ENCODE measurements at regions of chr17 and their contacts with region 1.

Region 1: GRCh38 chr17:76681222-76682137 is 29.3 kb downstream of the MXRA7 start:
- DNase-seq: peak; percentile 83
- H3K4me3 Mint-ChIP-seq: no peak overlapping the region
- H3K27ac Mint-ChIP-seq: no peak overlapping the region
- H3K4me1 Mint-ChIP-seq: no peaks in the 10 kb centered on the region
- H3K27me3 Mint-ChIP-seq: no peaks in the 10 kb centered on the region

Region 2: DNA sequence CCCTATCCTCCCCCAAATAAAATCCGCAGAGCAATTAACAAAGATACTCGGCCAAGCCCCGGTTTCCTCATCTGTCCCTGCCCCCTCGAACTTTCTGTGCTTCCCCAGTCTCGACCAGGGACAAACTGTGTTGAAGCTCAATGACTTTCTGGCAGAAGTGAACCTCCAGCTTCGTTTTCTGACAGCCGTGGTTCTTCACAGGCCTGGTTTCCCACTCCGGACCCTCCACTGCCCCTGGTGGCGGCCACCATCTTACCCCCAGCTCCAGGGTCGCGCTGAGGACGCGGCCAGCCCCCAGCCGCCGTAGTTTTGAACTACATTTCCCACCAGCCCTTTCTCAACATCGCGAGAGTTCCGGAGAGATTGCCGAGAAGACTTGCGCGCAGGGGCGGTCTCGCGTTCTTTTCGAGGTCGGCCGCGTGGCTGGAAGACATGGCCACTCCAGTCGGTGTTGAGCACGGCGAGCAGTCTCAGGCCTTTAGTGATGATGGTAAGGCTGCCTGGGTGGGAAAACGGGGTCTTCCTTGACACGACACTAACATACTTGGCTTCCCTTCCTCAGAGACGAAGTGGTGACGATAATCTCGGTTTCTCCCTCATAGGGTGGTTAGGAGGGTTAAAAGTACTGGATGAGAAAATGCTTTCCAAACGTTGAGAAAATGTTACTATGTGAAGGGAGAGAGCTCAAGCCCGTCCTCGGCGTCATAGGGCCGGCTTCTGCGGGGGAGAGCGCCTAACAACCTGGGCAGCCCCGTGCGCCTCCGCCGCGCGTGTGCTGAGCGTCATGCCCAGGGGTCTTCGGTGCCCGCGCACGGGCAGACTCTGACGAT is 123.9 kb before region 1 on chr17:
- CTCF ChIA-PET with region 1: interaction called, 9 read pairs
- intact Hi-C with region 1: loop called (anchors 1 kb)
- DNase-seq: peak; percentile 97
- H3K4me3 Mint-ChIP-seq: peak overlapping the region; percentile 96
- H3K27ac Mint-ChIP-seq: peak overlapping the region; percentile 96
- H3K4me1 Mint-ChIP-seq: peaks cover 54% of the 10 kb centered on the region
- H3K27me3 Mint-ChIP-seq: no peaks in the 10 kb centered on the region

Region 3: DNA sequence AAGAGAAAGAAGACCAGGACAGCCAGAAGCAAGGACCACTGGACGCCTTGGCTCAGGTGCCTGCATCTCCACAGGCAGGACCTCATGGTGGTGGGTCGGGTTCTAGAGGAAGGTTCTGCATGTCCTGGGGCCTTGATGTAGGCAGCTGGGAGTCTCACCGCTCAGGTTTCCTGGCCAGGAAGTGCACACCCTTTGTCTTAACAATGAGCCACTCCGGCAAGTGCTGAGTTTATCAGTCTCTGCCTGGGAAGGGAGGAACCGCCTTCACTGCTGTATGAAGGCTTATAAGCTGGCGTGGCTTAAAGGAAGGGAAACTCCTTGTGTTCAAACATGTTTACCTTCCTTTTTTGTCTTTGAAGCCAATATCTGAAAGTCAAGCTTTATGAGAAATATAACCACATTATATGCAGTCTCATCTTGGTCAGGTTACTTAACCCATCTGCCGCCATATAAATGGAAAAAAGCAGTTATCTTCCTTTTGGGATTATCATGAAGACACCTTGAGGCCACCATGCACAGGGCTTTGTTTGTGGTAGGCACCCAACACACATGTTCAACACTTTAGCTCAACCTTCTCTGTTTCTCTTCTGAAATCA is 37.8 kb before region 1 on chr17 and contains the start of gene ST6GALNAC1:
- CTCF ChIA-PET with region 1: interaction called, 4 read pairs
- intact Hi-C with region 1: loop called (anchors 5 kb)
- DNase-seq: peak; percentile 58
- H3K4me3 Mint-ChIP-seq: peak within 1 kb of the TSS; percentile 57
- H3K27ac Mint-ChIP-seq: peak within 1 kb of the TSS; percentile 62
- H3K4me1 Mint-ChIP-seq: peaks cover 28% of the 10 kb centered on the region
- H3K27me3 Mint-ChIP-seq: no peaks in the 10 kb centered on the region
- total RNA-seq, gene ST6GALNAC1: 1.1 to 1.3 TPM

Region 4: DNA sequence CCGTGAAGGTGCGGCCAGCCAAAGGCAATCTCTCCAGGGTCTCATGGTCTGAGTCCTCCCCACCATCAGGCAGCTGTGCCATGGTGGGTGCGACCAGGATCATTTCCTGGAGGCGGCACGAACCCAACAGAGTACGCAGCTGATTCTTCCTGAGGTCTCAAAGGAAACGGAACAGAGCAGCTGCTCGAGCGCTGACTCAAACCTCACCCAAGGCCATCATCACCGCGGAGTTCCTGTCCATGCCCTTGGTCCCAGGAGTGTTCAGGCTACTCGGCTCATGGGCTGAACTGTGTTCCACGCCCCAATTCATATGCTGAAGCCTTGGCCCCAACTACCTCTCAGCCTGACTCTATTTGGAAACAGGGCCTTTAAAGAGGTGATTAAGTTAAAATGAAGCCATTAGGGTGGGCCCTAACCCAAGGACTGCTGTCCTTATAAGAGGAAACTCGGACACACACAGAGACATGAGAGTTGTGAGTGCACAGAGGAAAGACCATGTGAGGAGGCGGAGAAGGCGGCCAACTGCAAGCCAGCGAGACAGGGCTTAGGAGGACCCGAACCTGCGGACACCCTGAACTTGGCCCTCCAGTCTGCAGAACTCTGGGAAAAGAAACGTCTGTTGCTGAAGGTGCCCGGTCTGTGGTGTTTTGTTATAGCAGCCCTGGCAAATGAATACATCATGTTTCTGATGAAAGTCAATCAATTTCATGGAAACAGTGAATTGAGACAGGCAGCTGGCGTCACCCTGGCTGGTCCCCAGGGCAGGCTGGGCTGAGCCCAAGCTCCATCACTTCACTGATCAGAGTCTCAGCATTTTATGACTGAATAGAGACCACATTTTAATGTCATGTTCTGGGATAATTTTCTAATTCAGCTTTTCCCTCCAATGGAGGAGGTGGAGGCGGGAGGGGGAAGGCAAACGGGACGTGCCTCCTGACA is 15.6 kb after region 1 on chr17:
- CTCF ChIA-PET with region 1: interaction called, 11 read pairs
- intact Hi-C with region 1: no loop called
- DNase-seq: no peak
- H3K4me3 Mint-ChIP-seq: no peak overlapping the region
- H3K27ac Mint-ChIP-seq: no peak overlapping the region
- H3K4me1 Mint-ChIP-seq: no peaks in the 10 kb centered on the region
- H3K27me3 Mint-ChIP-seq: no peaks in the 10 kb centered on the region